ENCODE measurements at regions of chr1 and their contacts with region 1.

Region 1: DNA sequence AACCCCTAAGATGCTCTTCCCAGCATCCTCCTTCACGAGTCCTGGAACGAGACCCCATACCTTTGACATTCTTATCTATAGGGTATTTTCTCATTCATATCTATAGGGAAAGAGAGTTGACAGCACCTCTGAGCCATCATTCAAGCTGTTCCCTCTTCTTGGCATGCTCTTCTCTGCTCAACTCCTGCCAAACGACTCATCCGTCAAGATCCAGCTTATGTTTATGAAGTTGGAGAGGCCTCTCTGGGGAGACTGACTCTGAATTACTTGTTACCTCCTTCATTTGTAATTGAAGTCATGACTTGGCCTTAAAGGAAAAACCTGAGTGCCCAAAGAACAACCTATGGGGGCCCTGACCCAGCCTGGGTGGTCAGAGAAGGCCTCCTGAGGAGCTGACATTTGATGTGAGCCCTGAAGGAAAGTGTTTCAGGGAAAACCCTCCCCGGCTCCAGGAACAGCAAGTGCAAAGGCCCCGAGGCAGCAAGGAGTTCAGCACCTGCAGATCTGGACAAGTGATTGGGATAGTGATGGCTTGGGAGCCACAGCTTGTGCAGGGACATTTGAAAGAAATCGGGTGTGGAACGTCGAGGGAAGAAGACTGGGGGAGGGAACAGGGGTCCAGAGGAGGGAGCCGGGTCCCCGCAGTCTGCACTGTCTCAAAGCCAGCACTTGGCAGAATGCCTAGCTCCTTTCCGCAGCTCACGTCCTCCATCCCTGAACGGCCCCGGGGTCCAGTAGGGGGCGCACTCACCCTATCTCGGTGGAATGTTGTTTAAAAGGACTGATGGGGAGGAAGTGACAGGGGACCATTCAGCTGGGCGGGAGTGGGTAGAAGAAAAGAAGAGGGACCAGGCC is 14.0 kb upstream of the CDA start:
- DNase-seq: peak; percentile 87
- H3K4me3 Mint-ChIP-seq: no peak overlapping the region
- H3K27ac Mint-ChIP-seq: no peak overlapping the region
- H3K4me1 Mint-ChIP-seq: no peaks in the 10 kb centered on the region
- H3K27me3 Mint-ChIP-seq: peaks cover 50% of the 10 kb centered on the region
- CTCF ChIP-seq: peak; percentile 60

Region 2: DNA sequence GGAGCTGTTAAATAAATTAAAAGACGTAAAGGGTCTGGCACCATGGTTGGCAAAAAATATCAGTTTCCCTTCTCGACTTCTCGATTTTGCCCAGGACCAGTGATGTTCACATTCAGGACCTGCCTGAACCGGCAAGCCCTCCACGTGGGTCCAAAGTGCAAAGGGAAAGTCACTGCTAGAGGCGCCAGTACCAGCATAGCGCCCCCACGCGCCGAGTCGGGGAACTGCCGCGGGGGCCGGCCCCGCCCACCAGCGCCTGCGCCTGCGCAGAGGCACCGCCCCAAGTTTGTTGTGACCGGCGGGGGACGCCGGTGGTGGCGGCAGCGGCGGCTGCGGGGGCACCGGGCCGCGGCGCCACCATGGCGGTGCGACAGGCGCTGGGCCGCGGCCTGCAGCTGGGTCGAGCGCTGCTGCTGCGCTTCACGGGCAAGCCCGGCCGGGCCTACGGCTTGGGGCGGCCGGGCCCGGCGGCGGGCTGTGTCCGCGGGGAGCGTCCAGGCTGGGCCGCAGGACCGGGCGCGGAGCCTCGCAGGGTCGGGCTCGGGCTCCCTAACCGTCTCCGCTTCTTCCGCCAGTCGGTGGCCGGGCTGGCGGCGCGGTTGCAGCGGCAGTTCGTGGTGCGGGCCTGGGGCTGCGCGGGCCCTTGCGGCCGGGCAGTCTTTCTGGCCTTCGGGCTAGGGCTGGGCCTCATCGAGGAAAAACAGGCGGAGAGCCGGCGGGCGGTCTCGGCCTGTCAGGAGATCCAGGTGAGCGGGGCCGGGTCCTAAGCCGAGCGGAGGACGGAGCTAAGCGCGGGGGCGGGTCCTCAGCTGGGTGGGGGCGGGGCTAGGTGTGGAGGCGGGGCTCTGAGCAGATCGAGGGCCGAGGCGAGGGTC is 58.5 kb after region 1 on chr1 and contains the start of gene PINK1:
- CTCF ChIA-PET with region 1: interaction called, 49 read pairs
- intact Hi-C with region 1: no loop called
- DNase-seq: peak; percentile 84
- H3K4me3 Mint-ChIP-seq: peak within 1 kb of the TSS; percentile 72
- H3K27ac Mint-ChIP-seq: no peak within 1 kb of the TSS
- H3K4me1 Mint-ChIP-seq: no peaks in the 10 kb centered on the region
- H3K27me3 Mint-ChIP-seq: no peaks in the 10 kb centered on the region
- CTCF ChIP-seq: peak; percentile 96
- total RNA-seq, gene PINK1: 11.2 and 11.9 TPM in 2 replicates

Region 3: GRCh38 chr1:20640183-20640597 is 65.3 kb after region 1 on chr1:
- CTCF ChIA-PET with region 1: interaction called, 49 read pairs
- intact Hi-C with region 1: loop called (anchors 1 kb)
- DNase-seq: peak; percentile 49
- H3K4me3 Mint-ChIP-seq: no peak overlapping the region
- H3K27ac Mint-ChIP-seq: no peak overlapping the region
- H3K4me1 Mint-ChIP-seq: no peaks in the 10 kb centered on the region
- H3K27me3 Mint-ChIP-seq: no peaks in the 10 kb centered on the region
- CTCF ChIP-seq: peak; percentile 74